Common myeloid progenitor, CD34-positive (primary cell): ENCODE measurements at regions of chr13 and their contacts with region 1.

Region 1: DNA sequence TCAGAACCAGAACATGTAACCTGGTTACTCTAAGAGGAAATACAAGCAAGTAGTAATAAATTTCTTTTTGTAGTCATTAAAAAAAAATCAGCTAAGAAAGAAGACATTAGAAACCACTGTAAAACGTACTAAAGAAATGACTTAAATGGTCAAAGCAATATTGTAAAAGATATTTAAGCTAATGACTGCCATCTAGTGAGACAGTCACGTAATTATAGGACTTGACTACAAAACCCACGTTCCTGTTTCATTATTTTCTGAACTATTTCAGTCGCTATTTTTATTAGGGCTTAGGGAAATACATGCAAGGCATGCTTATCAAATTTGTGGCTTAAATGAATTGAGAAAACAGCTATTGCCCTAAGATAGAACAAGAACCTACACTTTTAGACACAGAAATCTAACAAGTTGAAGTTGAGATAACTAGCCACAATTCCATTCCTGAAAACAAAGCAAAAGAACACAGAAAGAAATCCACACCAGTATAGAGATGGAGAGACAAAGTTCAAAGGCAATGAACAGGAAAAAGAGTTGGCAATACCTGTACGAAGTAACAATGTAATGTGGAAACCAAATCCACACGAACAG is 17.9 kb downstream of the ALG5 start:
- DNase-seq: peak; percentile 66 to 83 (median 81)
- H3K4me3 ChIP-seq: no peak overlapping the region
- H3K27ac ChIP-seq: peak overlapping the region in 1 of 2 experiments; percentile 14
- H3K4me1 ChIP-seq: no peaks in the 10 kb centered on the region
- H3K27me3 ChIP-seq: no peaks in the 10 kb centered on the region

Region 2: DNA sequence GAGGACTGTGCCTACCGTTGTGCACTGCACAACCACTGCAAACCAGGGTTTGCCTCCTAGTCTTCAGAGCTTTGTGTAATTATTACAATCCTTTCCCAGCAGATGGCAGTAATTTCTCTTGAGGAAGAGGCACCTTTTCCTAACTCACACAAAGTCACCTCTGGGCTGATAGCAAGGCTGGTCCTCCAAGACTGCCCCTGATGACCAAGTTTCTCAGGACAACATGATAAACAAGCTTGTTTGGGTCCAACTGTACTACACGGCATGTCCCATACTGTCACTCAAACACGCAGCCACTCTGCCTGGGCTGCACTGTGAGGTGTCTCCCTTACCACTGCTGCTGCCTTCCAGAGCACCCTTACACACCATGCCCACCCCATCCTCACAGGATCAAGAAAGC is 123.0 kb before region 1 on chr13:
- CTCF ChIA-PET with region 1: interaction called, 78 read pairs
- POLR2A ChIA-PET with region 1: no interaction called
- DNase-seq: peak; percentile 41 to 62 (median 62)
- H3K4me3 ChIP-seq: no peak overlapping the region
- H3K27ac ChIP-seq: no peak overlapping the region
- H3K4me1 ChIP-seq: no peaks in the 10 kb centered on the region
- H3K27me3 ChIP-seq: no peaks in the 10 kb centered on the region

Region 3: DNA sequence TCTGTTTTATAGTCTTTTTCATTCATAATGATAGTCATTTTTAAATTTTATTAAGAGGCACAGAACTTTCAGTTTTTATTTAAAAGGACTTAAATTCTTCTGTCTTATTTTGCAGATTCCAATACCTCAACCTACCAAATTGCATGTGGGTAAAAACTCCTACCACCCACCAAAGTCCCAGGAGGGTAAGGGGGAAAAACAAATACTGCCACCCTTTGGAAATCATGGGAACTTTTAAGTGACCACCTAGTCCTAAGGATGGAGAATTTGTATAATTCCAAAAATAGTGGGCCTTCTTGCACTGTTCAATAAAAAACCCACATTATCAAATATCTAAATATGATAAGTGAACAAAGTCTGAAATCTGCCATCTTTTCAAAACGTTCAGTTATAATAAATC is 68.6 kb after region 1 on chr13:
- CTCF ChIA-PET with region 1: no interaction called
- POLR2A ChIA-PET with region 1: no interaction called
- DNase-seq: no peak
- H3K4me3 ChIP-seq: no peak overlapping the region
- H3K27ac ChIP-seq: no peak overlapping the region
- H3K4me1 ChIP-seq: no peaks in the 10 kb centered on the region
- H3K27me3 ChIP-seq: no peaks in the 10 kb centered on the region

Region 4: DNA sequence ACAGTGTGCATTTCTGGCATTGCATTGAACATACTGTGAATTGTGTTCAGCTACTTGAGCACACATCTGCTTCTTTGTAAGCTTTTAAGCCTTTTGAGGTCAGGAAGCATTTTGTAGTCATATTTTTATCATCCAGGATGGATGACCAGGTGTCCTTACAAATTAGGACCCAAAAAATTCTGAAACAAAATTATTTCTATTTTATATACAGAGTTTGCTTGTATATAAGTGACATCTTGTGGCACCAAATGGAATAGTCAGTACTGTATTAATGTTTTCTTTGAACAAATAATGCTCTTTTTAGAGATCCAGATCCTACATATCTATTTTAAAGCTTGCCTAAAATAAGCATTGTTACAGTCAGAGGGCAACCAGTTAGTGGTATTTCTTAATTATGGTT is 87.7 kb after region 1 on chr13:
- CTCF ChIA-PET with region 1: interaction called, 12 read pairs
- POLR2A ChIA-PET with region 1: no interaction called
- DNase-seq: peak in 2 of 3 donors; percentile 24 to 38
- H3K4me3 ChIP-seq: no peak overlapping the region
- H3K27ac ChIP-seq: no peak overlapping the region
- H3K4me1 ChIP-seq: no peaks in the 10 kb centered on the region
- H3K27me3 ChIP-seq: no peaks in the 10 kb centered on the region

Region 5: DNA sequence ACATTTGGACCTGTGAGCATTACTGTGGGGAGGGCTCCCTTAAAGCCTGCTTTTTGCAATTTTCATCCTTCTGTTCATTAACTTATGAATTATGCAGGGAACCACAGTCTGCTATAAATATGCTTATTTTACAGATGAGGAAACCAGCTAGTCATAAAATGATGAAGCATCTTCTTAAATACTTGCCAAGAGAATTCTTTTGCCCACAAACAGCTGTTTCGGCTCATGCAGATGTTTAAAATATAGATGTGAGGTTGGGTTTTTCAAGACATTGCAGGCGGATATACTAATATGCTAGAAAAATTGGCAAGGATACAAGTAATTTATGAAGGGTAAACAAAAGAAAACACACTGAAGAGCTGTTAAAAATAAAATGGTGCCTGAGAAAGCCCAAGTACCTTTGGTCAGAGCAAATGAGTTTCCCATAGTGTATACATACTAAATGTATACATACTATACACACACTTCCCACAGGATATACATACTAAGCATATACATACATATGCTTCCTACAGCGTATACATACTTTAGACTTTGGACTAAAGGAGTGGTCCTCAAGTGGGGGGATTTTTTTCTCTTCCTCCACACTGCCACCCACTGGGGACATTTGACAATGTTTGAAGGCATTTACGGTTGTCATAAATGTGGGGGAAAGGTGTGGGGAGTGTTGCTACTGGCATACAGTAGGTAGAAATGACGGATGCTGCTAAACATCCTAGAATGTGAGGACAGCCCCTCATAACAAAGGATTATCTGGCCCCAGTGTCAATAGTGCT is 289.2 kb after region 1 on chr13:
- CTCF ChIA-PET with region 1: no interaction called
- POLR2A ChIA-PET with region 1: no interaction called
- DNase-seq: no peak
- H3K4me3 ChIP-seq: no peak overlapping the region
- H3K27ac ChIP-seq: no peak overlapping the region
- H3K4me1 ChIP-seq: no peaks in the 10 kb centered on the region
- H3K27me3 ChIP-seq: no peaks in the 10 kb centered on the region